T-cell (primary cell): ENCODE measurements at regions of chr3 and their contacts with region 1.

Region 1: DNA sequence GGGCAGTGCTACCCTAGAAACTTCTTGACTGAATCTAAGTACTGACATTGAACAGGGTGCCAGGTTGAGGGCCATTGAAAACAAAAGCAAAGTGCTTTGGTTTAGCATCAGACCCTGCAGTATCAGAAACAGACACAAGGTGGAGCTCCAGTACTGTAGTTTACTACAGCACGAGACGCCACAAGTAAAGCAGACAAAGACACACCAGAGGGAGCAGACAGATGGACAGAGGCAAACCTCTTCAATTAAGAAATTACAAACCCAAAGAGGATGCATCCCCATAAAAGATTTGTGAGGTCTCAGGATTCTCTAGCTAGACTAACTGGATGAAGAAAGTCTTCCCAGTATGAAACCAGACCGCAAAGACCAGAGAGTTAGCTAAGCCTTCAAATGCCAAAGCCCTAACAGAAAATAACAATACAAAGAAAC is 16.6 kb downstream of the TOP2B start:
- DNase-seq: peak; percentile 23 to 91 (median 70)
- ATAC-seq: peak; percentile 78 to 91 (median 84)
- H3K4me3 ChIP-seq: no peak overlapping the region
- H3K4me3 Mint-ChIP-seq: peak overlapping the region in 1 of 3 donors; percentile 2
- H3K27ac ChIP-seq: no peak overlapping the region
- H3K27ac Mint-ChIP-seq: peak overlapping the region; percentile 0 to 9
- H3K4me1 ChIP-seq: peaks cover 0 to 2% of the 10 kb centered on the region in 2 experiments
- H3K4me1 Mint-ChIP-seq: peaks cover 47 to 56% (median 50%) of the 10 kb centered on the region in 3 donors
- H3K27me3 ChIP-seq: no peaks in the 10 kb centered on the region
- H3K27me3 Mint-ChIP-seq: no peaks in the 10 kb centered on the region

Region 2: DNA sequence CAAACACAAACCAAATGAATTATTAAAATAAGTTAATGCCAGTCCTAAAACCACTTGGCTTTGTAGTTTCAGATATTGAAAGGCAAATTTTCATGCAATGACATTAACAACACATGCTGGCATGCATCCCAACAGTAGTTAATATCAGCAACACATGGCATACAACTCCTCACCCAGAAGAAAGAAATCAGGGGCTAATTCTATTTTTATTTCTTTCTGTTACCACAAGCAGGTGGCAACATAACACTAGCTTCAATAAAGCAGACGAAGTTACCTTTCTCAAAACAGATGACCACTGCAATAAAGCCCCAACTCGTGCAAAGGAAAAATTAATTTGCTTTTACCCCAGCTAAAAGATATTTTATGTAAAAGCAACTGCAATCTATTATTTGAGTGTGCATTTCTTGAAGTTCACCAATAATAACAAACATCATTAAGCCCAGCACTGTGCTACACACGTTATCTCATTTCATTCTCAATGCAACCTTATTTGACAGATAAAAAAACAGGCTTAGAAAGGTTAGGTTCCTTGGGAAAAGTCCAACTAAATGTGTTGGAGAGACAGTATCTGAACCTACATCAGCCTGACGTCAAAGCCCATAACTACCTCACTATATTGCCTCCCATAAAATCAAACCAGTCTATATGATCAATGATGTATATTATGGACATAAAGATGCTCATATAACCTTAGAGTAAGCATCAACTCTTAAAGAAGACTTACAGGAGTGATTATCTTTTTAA is 13.7 kb after region 1 on chr3:
- CTCF ChIA-PET with region 1: interaction called, 3 to 14 read pairs
- POLR2A ChIA-PET with region 1: interaction called in 1 of 2 experiments, 3 read pairs
- DNase-seq: no peak
- ATAC-seq: no peak
- H3K4me3 ChIP-seq: peak overlapping the region in 1 of 2 donors; percentile 23
- H3K4me3 Mint-ChIP-seq: peak overlapping the region; percentile 68 to 98 (median 90)
- H3K27ac ChIP-seq: no peak overlapping the region
- H3K27ac Mint-ChIP-seq: no peak overlapping the region
- H3K4me1 ChIP-seq: peaks cover 17 to 39% of the 10 kb centered on the region in 2 experiments
- H3K4me1 Mint-ChIP-seq: peaks cover 68 to 76% (median 75%) of the 10 kb centered on the region in 3 donors
- H3K27me3 ChIP-seq: no peaks in the 10 kb centered on the region
- H3K27me3 Mint-ChIP-seq: no peaks in the 10 kb centered on the region

Region 3: DNA sequence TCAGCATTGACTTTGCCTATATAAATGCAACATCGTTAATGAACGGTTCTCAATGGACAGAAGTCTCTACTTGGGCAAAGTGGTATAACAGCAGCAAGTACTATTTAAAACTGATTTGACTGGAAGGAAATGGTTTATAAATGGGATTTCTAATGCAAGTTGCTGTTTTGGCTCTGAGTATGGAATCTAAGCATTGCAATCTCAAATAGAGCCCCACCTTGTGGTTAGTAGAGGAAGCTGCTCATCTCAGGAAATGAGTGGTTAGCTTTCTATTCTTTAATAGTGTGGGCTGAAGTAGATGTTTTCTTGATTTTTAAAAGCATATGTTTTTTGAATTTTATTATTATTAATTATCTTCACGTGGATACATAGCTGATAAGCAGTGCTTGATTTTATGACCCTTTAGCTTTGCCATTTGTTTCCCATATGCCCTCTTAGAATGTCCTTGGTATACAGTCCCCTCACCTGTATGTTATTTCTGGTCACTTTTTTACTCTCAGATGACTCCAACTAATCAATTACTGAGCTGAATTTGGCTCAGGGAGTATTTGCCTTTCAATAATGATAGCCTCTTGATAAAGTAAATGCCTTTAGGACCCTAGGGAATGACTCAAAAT is 208.9 kb after region 1 on chr3:
- CTCF ChIA-PET with region 1: interaction called, 61 to 83 read pairs
- POLR2A ChIA-PET with region 1: no interaction called
- DNase-seq: peak in 7 of 35 experiments; percentile 2 to 64 (median 11)
- ATAC-seq: peak; percentile 57 to 70 (median 68)
- H3K4me3 ChIP-seq: no peak overlapping the region
- H3K4me3 Mint-ChIP-seq: no peak overlapping the region
- H3K27ac ChIP-seq: no peak overlapping the region
- H3K27ac Mint-ChIP-seq: no peak overlapping the region
- H3K4me1 ChIP-seq: no peaks in the 10 kb centered on the region
- H3K4me1 Mint-ChIP-seq: no peaks in the 10 kb centered on the region
- H3K27me3 ChIP-seq: no peaks in the 10 kb centered on the region
- H3K27me3 Mint-ChIP-seq: no peaks in the 10 kb centered on the region